ENCODE measurements at regions of chr11 and their contacts with region 1.

Region 1: GRCh38 chr11:128172046-128172878 is 415.1 kb downstream of the ETS1 start:
- DNase-seq: peak; percentile 96
- ATAC-seq: peak; percentile 81
- H3K4me3 Mint-ChIP-seq: no peak overlapping the region
- H3K27ac Mint-ChIP-seq: no peak overlapping the region
- H3K4me1 Mint-ChIP-seq: peaks cover 16% of the 10 kb centered on the region
- H3K27me3 Mint-ChIP-seq: no peaks in the 10 kb centered on the region
- CTCF ChIP-seq: peak; percentile 69

Region 2: GRCh38 chr11:128026596-128026995 is 145.7 kb before region 1 on chr11:
- CTCF ChIA-PET with region 1: interaction called, 13 read pairs
- POLR2A ChIA-PET with region 1: no interaction called
- intact Hi-C with region 1: no loop called
- DNase-seq: no peak
- ATAC-seq: no peak
- H3K4me3 Mint-ChIP-seq: no peak overlapping the region
- H3K27ac Mint-ChIP-seq: no peak overlapping the region
- H3K4me1 Mint-ChIP-seq: peaks cover 6% of the 10 kb centered on the region
- H3K27me3 Mint-ChIP-seq: no peaks in the 10 kb centered on the region
- CTCF ChIP-seq: no peak

Region 3: DNA sequence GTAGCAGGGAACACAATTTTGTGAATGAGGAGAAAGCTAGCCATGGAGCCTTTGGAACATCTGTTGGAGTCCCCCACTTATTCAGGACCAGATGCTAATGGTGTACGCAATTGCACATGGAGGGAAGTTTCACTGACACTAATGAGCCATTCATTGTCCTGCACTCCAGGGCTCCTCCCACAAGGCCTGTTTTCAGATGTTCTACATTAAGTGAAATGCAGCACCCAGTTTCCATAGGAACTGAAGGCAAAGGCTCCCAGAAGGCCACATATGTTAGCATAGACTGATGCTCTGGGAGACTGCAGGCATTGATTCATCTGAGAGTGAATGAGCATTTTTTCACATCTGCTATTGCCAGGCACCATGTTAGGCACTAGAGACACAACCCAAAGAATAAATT is 15.6 kb after region 1 on chr11:
- CTCF ChIA-PET with region 1: interaction called, 25 read pairs
- POLR2A ChIA-PET with region 1: interaction called, 3 read pairs
- intact Hi-C with region 1: no loop called
- DNase-seq: no peak
- ATAC-seq: no peak
- H3K4me3 Mint-ChIP-seq: no peak overlapping the region
- H3K27ac Mint-ChIP-seq: no peak overlapping the region
- H3K4me1 Mint-ChIP-seq: peaks cover 30% of the 10 kb centered on the region
- H3K27me3 Mint-ChIP-seq: no peaks in the 10 kb centered on the region
- CTCF ChIP-seq: no peak

Region 4: GRCh38 chr11:128506999-128507611 is 334.8 kb after region 1 on chr11:
- CTCF ChIA-PET with region 1: interaction called, 6 read pairs
- POLR2A ChIA-PET with region 1: no interaction called
- intact Hi-C with region 1: loop called (anchors 5 kb)
- DNase-seq: peak; percentile 77
- ATAC-seq: peak; percentile 32
- H3K4me3 Mint-ChIP-seq: peak overlapping the region; percentile 95
- H3K27ac Mint-ChIP-seq: peak overlapping the region; percentile 96
- H3K4me1 Mint-ChIP-seq: peaks cover 86% of the 10 kb centered on the region
- H3K27me3 Mint-ChIP-seq: no peaks in the 10 kb centered on the region
- CTCF ChIP-seq: no peak

Region 5: DNA sequence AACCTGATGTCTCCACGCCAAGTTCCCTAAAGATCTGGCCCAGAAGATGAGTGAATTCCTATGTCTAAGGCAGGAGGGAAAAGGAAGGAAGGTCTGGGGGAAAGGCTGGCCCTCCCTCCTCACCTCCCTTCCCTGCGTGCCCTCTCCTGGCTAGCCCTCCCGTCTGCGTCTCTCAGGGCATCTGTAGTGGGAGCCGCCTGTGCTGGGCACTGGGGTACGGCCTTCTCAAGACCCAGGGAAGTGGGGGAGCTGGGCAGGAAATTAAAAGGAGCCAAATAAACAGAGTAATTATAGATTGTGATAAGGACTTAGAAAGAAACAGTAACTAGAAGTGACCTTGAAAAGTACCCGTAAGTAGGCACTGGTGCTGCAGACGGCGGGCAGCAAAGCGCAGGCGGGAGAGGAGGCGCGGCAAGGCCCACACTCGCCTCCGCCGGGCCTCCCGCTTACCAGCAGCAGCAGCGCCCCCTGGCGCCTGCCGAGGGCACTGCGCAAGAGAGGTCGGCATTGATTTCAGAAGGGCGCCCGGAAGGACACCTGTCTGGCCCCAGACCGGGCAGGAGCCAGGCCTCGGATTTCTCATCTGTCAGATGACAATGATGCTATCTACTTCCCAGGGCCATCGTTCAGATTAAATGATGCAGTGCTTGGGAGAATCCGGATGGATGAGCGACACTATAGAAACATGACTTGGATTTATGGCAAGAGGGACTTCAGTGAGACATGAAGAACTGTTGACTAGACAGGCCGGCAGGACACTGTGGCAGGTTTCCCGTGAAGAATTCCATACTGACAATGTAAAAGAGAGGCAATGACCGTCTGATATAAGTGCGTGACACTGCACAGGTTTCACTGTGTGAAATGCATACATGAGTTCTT is 687.5 kb after region 1 on chr11:
- CTCF ChIA-PET with region 1: interaction called, 14 read pairs
- POLR2A ChIA-PET with region 1: no interaction called
- intact Hi-C with region 1: no loop called
- DNase-seq: peak; percentile 87
- ATAC-seq: peak; percentile 98
- H3K4me3 Mint-ChIP-seq: no peak overlapping the region
- H3K27ac Mint-ChIP-seq: no peak overlapping the region
- H3K4me1 Mint-ChIP-seq: no peaks in the 10 kb centered on the region
- H3K27me3 Mint-ChIP-seq: peaks cover 1% of the 10 kb centered on the region
- CTCF ChIP-seq: peak; percentile 98